HepG2 (cell line): ENCODE measurements at regions of chr12 and their contacts with region 1.

Region 1: GRCh38 chr12:1939801-1940607 is 21.6 kb upstream of the CACNA2D4 start:
- DNase-seq: peak; percentile 55
- ATAC-seq: peak; percentile 94
- H3K4me3 ChIP-seq: no peak overlapping the region
- H3K27ac ChIP-seq: no peak overlapping the region
- H3K4me1 ChIP-seq: peaks cover 10% of the 10 kb centered on the region
- H3K27me3 ChIP-seq: no peaks in the 10 kb centered on the region
- CTCF ChIP-seq: peak; percentile 91
- EP300 ChIP-seq: no peak
- POLR2A ChIP-seq: no peak
- RAD21 ChIP-seq: peak; percentile 89

Region 2: DNA sequence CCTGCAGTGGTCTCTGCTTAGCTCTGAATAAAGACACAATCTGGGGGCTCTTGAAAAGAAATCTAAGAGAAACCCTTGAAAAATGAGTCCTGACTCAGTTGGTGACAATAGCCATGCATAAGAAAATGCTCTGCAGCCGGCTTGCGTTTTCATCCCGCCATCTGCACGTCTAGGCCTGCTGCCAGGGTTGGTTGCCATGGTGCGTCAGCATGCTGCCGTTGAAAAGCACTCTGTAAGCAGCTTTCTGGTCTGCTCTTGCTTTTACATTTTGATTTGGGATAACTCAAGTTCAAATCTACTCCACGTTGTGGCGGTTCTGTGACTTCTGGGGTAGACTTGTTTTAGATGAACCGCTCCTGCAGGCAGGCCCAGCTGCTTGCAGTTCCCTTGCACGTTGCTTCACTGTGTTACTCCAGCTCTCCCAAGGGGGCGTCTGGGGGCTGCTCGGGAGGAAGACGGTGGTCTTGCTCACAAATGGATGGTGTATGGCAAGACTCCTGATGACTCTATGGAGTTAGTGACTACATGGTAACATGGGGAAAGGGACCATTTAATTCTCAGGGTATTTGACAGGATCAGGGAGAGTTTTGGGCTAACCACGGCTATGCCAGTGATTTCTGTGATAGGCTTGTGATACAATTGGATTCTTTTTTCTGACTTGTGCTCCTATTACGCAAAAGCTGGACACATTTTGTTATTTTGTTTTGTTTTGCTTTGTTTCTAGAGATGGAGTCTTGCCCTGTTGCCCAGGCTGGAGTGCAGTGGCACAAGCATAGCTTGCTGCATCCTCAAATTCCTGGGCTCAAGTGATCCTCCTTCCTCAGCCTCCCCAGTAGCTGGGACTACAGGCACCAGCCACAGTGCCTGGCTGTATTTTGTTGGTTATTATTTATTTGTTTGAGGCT is 295.2 kb before region 1 on chr12:
- CTCF ChIA-PET with region 1: no interaction called
- POLR2A ChIA-PET with region 1: no interaction called
- in situ Hi-C with region 1: loop called (anchors 5 kb)
- intact Hi-C with region 1: no loop called
- DNase-seq: no peak
- ATAC-seq: peak; percentile 21; the same call in 2 of the 3 replicates
- H3K4me3 ChIP-seq: no peak overlapping the region
- H3K27ac ChIP-seq: no peak overlapping the region
- H3K4me1 ChIP-seq: peaks cover 38% of the 10 kb centered on the region
- H3K27me3 ChIP-seq: peaks cover 6 to 75% of the 10 kb centered on the region in 2 experiments
- CTCF ChIP-seq: no peak
- EP300 ChIP-seq: no peak
- POLR2A ChIP-seq: no peak
- RAD21 ChIP-seq: no peak

Region 3: DNA sequence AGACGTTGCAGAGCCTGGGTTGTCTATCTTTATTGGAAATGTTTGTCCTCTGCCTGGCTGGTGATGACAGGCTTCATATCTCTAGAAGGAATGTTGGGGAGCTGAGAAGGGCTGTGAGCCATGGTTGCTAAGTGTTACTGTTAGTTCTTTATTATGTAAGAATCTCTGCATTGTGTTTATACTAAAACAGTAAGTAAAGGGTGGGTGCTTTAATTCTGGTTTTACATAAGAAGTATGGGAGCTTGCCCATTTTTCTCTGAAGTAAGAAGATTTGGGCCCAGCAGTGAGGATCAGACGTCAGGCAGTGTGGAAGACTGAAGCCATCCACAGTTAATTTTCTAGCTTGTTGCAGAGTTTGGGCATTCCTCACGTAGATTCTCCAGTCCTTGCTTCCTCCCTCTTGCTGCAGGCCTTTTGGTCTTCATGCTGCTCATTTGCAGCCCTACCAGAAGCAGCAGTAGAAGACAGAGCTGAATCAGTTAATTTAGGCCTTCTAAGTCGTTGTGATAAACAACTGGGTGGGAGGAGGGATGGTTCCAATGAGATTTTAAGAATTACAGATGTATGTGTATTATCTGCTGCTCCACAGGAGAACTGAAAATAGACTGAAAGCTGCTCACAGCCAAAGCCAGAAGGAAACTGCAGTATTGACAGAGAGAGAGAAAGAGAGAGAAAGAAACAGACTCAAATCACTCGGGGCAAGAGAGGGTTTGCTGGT is 289.6 kb before region 1 on chr12:
- CTCF ChIA-PET with region 1: no interaction called
- POLR2A ChIA-PET with region 1: no interaction called
- in situ Hi-C with region 1: loop called (anchors 5 kb)
- intact Hi-C with region 1: loop called (anchors 5 kb)
- DNase-seq: no peak
- ATAC-seq: no peak
- H3K4me3 ChIP-seq: no peak overlapping the region
- H3K27ac ChIP-seq: no peak overlapping the region
- H3K4me1 ChIP-seq: peaks cover 46% of the 10 kb centered on the region
- H3K27me3 ChIP-seq: peaks cover 0 to 45% of the 10 kb centered on the region in 2 experiments; a peak in 3 of 5 replicates
- CTCF ChIP-seq: no peak
- EP300 ChIP-seq: no peak
- POLR2A ChIP-seq: no peak
- RAD21 ChIP-seq: no peak